AG04449 (cell line): ENCODE measurements at regions of chr14 and their contacts with region 1.

Region 1: DNA sequence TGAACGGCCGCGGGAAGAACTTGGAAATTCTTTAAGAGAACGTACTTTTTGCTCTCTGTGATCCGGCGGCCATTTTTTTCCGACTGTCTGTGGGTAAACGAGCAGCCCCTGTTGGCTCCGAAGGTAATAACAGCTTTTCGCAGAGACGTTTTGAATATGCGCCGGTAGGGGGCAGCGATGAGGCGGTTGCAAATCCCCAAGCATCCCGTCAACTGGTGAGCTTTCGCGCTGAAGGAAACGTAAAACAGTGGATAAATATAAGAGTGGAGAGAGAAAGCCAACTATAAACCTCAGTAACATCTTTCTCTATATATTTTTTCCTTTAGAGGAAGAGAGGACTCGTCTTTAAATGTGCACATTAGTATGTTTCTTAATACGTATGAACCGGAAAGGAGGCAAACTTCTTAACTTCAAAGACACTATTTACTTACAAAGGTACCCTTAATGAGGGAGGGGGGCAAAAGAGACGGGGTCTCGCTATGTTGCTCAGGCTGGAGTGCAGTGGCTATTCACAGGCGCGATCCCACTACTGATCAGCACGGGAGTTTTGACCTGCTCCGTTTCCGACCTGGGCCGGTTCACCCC is 9.6 kb upstream of the NEMF start:
- DNase-seq: peak; percentile 45
- H3K4me3 ChIP-seq: peak overlapping the region; percentile 64
- CTCF ChIP-seq: peak; percentile 99

Region 2: GRCh38 chr14:49879683-49880204 is 17.6 kb after region 1 on chr14:
- CTCF ChIA-PET with region 1: interaction called, 29 read pairs
- POLR2A ChIA-PET with region 1: interaction called, 3 read pairs
- DNase-seq: no peak
- H3K4me3 ChIP-seq: no peak overlapping the region
- CTCF ChIP-seq: peak; percentile 65

Region 3: DNA sequence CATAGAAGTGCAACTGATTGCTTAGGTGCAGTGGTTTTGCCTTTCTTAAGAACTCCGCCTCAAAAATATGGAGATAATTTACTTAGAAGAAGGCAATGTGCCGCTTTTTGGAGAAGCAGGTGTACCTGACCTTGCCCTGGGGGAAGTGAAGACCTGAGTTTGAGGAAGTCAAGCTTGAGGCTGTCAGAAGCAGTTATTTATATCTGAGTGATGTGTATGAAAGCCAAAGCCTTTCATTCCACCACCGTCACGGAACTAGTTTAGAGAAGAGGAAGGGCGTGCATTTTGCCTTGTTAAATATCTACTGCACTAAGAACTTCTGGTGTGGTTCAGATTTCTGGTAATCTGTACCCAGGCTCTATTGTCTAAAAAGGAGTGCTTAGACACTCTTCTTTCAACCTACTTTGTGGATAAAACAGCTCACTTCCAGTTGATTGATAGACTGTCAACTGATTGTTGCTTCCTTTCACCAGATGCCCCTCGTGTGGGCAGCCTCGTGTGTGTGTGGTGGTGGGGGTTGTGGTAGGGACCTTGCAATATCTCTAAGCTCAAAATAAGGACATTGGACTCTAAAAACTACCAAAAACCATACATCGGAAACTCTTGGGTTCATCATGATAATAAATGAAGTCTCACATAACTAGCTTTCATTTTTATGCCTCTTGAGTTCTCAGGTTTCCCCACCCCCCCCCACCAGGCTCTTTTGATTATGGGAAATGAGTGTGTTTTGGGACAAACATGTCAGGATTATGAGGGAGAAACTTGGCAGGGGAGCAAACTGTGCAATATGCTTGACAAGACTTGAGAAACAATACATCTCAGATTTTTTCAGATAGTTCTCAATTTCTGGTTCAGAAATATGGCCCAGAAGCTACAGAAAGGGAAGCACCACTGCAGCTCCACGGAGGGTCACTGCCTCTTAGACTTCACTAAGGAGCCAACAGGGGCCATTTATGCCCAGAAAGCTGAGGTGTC is 109.3 kb after region 1 on chr14:
- CTCF ChIA-PET with region 1: interaction called, 13 read pairs
- POLR2A ChIA-PET with region 1: interaction called, 3 read pairs
- DNase-seq: no peak
- H3K4me3 ChIP-seq: no peak overlapping the region
- CTCF ChIP-seq: no peak

Region 4: GRCh38 chr14:50038398-50039119 is 176.4 kb after region 1 on chr14:
- CTCF ChIA-PET with region 1: interaction called, 11 read pairs
- POLR2A ChIA-PET with region 1: interaction called, 25 read pairs
- DNase-seq: peak; percentile 95
- H3K4me3 ChIP-seq: no peak overlapping the region
- CTCF ChIP-seq: no peak

Region 5: DNA sequence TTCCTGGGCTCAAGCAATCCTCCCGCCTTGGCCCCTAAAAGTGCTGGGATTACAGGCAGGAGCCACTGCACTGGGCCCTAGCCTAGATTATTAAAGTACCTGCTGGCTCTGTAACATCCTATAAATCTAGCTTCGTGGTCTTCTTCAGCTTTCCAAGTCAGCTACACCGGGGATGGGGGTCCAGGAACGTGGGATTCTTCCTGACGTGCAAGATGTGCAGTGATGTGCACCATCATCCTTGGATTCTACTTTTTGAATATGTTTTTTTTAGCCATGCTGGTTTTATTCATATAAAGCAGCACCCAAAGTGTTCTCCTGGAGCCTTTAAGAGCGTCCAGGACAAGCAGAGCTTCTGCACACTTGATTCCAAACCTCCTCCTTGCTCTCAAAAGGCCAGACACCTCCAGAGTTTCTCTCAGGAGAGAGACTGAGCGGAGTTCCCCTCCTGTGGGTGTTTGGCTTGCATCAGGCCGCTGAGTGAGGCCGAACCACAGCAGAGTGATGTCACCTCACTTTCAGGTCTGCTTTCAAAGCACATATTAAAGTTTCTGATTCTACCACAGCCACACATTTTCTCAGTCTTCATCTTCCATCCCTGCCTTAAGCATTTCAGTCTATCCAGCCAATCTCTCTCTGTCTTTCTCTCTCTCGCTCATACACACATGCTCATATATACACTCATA is 220.7 kb after region 1 on chr14:
- CTCF ChIA-PET with region 1: interaction called, 60 read pairs
- POLR2A ChIA-PET with region 1: no interaction called
- DNase-seq: no peak
- H3K4me3 ChIP-seq: no peak overlapping the region
- CTCF ChIP-seq: no peak

Region 6: DNA sequence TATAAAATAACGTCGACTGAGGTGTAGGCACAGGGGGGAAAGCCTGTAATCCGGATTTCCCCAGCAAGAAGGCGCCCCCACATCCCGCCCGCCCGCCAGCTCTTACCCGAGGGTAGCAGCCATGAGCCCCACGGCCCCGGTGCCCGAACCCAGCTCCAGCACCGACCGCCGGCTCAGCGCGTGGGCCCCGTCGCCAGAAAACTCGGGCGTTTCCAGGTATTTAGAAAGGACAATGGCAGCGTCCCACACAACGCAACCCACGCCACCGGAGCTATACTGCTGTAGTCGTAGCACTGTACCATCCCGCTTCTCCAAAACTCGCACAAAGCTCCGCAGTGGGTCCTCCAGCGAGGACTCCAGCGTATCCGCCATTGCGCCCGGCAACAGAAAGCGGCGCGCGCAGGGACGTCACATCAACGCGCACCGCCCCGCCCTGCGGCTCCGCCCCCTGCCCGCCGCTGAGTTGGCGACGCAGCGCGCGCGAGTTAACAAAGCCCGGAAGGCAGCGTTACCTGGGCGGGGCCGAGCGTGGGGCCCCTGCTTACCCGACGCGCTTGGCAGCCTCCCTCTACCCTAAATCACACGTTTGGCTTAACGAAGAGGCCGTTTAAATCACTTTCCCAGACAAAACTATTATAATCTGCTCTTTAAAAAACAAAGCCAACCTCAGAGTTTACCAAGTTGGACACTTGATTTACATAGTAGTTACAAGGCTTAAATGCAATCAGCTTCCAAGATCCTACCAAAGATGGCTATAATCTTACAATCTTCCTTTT is 254.2 kb after region 1 on chr14 and contains the start of gene VCPKMT:
- CTCF ChIA-PET with region 1: interaction called, 120 read pairs
- POLR2A ChIA-PET with region 1: no interaction called
- DNase-seq: peak; percentile 23
- H3K4me3 ChIP-seq: peak within 1 kb of the TSS; percentile 86
- CTCF ChIP-seq: no peak